HepG2 (cell line): ENCODE measurements at regions of chr10 and their contacts with region 1.

Region 1: DNA sequence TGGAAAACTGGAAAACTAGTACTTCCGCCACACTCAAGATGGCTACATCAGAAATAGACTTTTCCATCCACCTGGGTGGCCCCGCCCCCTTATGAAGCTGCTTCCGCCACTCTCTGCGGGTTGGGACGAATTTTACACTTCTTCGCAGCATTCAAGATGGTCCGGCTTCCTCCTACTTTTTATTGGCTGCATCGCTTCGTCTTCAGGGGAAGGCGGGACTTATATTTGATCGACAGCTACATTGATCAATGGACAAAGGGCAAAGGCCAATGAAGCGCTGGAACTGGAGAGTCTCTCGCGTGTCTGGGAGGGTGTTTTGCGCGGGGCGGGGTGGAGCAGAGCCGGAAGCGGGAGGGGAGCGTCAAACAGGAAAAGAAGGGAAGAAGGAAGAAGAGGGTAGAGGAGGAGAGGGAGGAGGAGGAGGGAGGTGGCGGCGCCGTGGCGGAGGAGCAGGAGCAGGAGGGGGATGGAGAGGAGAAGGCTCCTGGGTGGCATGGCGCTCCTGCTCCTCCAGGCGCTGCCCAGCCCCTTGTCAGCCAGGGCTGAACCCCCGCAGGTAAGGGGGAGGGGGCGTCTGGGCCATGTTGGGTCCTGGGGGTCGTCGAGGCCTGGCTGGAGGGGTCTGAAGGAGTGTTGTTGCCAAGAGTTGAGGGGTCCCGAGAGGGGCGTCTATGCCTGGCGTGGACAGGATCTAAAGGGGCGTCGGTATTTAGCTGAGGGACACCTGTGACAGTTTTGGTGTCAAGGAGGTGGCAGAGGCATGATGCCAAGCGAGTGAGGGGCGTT is at the start of gene WBP1L:
- DNase-seq: peak; percentile 99
- ATAC-seq: peak; percentile 94
- H3K4me3 ChIP-seq: peak within 1 kb of the TSS; percentile 72 to 94 (median 82)
- H3K27ac ChIP-seq: peak within 1 kb of the TSS; percentile 41
- H3K4me1 ChIP-seq: peaks cover 35% of the 10 kb centered on the region
- H3K27me3 ChIP-seq: no peaks in the 10 kb centered on the region; a peak in 1 of 5 replicates
- CTCF ChIP-seq: no peak
- EP300 ChIP-seq: no peak
- POLR2A ChIP-seq: peak; percentile 25 to 64
- RAD21 ChIP-seq: no peak; the same call in 1 of the 2 replicates
- total RNA-seq, gene WBP1L: 8.3 and 11.6 TPM in 2 replicates

Region 2: GRCh38 chr10:102055647-102056419 is 687.9 kb before region 1 on chr10 and contains the start of gene ARMH3:
- CTCF ChIA-PET with region 1: no interaction called
- POLR2A ChIA-PET with region 1: no interaction called
- in situ Hi-C with region 1: no loop called
- intact Hi-C with region 1: no loop called
- DNase-seq: peak; percentile 98
- ATAC-seq: peak; percentile 94
- H3K4me3 ChIP-seq: peak within 1 kb of the TSS; percentile 85 to 99 (median 94)
- H3K27ac ChIP-seq: peak within 1 kb of the TSS; percentile 86
- H3K4me1 ChIP-seq: peaks cover 40% of the 10 kb centered on the region
- H3K27me3 ChIP-seq: no peaks in the 10 kb centered on the region; a peak in 1 of 5 replicates
- CTCF ChIP-seq: no peak; the same call in 1 of the 2 replicates
- EP300 ChIP-seq: 0 out of 4 replicates have a peak, but pooled peaks of 1 of the 2 experiments have one; percentile 15
- POLR2A ChIP-seq: peak; percentile 53 to 70
- RAD21 ChIP-seq: no peak
- total RNA-seq, gene ARMH3: 8.4 and 10.8 TPM in 2 replicates

Region 3: DNA sequence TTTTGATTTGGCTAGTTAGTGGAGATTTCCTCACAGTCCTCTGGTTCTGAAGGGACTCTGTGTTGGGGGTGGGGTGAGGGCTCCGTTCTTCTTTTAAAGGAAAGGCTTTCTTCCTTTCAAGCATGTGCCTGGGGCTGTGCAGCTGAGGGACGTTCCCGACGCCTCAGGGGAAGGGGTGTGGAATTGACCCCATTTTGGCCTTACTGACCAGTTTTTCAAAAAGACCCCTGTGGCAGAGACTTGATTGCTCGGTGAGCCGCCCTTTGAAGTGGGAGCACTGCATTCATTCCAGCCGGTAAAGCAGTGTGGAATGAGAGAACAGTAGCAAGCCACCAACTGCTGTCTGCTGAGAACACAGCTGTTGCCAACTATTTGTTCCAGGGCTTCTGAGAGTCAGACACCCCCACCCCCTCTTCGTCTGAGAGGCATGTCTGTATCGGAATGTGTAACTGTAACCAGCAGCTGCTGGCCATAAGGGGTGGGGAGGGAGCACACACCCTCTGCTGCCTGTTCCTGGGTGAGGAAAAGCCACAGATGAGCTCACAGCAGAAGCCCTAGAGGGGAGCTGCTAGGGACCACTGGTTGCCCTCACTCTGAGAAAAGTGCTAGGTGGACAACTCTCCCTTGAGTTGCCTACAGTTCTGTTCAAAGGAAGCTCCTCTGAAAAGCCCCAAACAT is 33.1 kb after region 1 on chr10:
- CTCF ChIA-PET with region 1: no interaction called
- POLR2A ChIA-PET with region 1: interaction called, 5 read pairs
- in situ Hi-C with region 1: no loop called
- intact Hi-C with region 1: loop called (anchors 5 kb)
- DNase-seq: peak; percentile 85
- ATAC-seq: peak; percentile 83
- H3K4me3 ChIP-seq: peak overlapping the region; percentile 55 to 63 (median 62)
- H3K27ac ChIP-seq: peak overlapping the region; percentile 33
- H3K4me1 ChIP-seq: peaks cover 47% of the 10 kb centered on the region
- H3K27me3 ChIP-seq: no peaks in the 10 kb centered on the region; a peak in 1 of 5 replicates
- CTCF ChIP-seq: no peak
- EP300 ChIP-seq: no peak
- POLR2A ChIP-seq: no peak; a peak in 1 of 4 replicates
- RAD21 ChIP-seq: no peak

Region 4: GRCh38 chr10:103069453-103070331 is 325.9 kb after region 1 on chr10:
- CTCF ChIA-PET with region 1: no interaction called
- POLR2A ChIA-PET with region 1: no interaction called
- in situ Hi-C with region 1: loop called (anchors 25 kb)
- intact Hi-C with region 1: no loop called
- DNase-seq: peak; percentile 41
- ATAC-seq: peak; percentile 81
- H3K4me3 ChIP-seq: no peak overlapping the region
- H3K27ac ChIP-seq: no peak overlapping the region
- H3K4me1 ChIP-seq: no peaks in the 10 kb centered on the region
- H3K27me3 ChIP-seq: no peaks in the 10 kb centered on the region
- CTCF ChIP-seq: peak; percentile 83
- EP300 ChIP-seq: no peak
- POLR2A ChIP-seq: no peak
- RAD21 ChIP-seq: peak; percentile 94